ENCODE measurements at regions of chr3 and their contacts with region 1.

Region 1: GRCh38 chr3:100492059-100493006 is at the start of gene TMEM45A:
- DNase-seq: peak; percentile 98
- ATAC-seq: peak; percentile 97
- H3K4me3 ChIP-seq: peak within 1 kb of the TSS; percentile 79
- H3K27ac ChIP-seq: peak within 1 kb of the TSS; percentile 38; the same call in 1 of the 2 replicates
- H3K4me1 ChIP-seq: peaks cover 29% of the 10 kb centered on the region
- H3K27me3 ChIP-seq: no peaks in the 10 kb centered on the region
- CTCF ChIP-seq: no peak
- total RNA-seq, gene TMEM45A: 7.6 and 9.4 TPM in 2 replicates

Region 2: DNA sequence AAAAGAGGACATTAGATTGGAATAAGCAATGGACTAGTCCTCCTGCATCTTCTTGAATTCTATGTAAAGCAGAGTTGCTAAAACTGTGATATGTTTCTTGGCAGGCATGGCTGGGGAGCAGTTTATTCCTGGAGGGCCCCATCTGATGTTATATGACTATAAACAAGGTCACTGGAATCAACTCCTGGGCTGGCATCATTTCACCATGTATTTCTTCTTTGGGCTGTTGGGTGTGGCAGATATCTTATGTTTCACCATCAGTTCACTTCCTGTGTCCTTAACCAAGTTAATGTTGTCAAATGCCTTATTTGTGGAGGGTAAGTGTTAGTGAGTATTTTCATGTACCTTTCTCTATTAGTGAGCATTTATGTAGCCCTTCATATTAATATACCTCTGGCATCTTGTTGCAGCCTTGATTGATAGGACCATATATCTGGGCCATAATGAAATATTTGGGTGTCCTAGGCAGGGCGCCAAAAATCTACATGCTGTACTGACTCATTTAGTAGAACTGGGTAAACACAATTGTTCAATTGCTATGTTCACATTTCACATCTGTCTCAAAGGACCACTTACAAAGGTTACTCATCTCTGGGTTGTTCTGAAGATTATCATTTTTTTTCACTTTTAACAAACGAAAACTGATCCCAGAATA is 64.5 kb after region 1 on chr3:
- CTCF ChIA-PET with region 1: no interaction called
- POLR2A ChIA-PET with region 1: no interaction called
- intact Hi-C with region 1: loop called (anchors 2 kb)
- DNase-seq: peak; percentile 87
- ATAC-seq: peak; percentile 72
- H3K4me3 ChIP-seq: no peak overlapping the region
- H3K27ac ChIP-seq: peak overlapping the region; percentile 60
- H3K4me1 ChIP-seq: peaks cover 50% of the 10 kb centered on the region
- H3K27me3 ChIP-seq: no peaks in the 10 kb centered on the region
- CTCF ChIP-seq: no peak

Region 3: DNA sequence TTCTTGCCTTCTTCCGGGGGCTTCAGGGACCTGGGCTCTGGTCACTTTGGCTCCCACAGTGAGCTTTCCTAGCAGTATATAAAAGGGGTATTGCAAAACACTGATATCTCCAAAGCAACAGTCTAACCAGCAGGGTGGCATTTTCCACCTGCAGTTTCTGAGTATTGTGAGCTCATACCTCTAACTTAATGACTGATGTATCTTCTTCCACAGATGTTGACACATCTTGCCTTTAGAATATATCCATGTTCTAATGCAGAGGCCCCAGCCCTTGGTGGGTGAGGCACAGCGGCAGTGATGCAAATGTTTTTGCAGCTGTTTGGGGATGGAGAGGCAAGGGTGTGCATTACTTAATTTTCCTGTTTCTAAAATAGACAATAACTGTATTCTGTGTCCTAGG is 71.4 kb after region 1 on chr3:
- CTCF ChIA-PET with region 1: interaction called, 9 read pairs
- POLR2A ChIA-PET with region 1: interaction called, 10 read pairs
- intact Hi-C with region 1: no loop called
- DNase-seq: no peak
- ATAC-seq: no peak
- H3K4me3 ChIP-seq: no peak overlapping the region
- H3K27ac ChIP-seq: no peak overlapping the region
- H3K4me1 ChIP-seq: peaks cover 5% of the 10 kb centered on the region; the same call in 1 of the 2 replicates
- H3K27me3 ChIP-seq: no peaks in the 10 kb centered on the region
- CTCF ChIP-seq: no peak

Region 4: GRCh38 chr3:100590114-100590839 is 97.9 kb after region 1 on chr3:
- CTCF ChIA-PET with region 1: interaction called, 6 read pairs
- POLR2A ChIA-PET with region 1: no interaction called
- intact Hi-C with region 1: loop called (anchors 1 kb)
- DNase-seq: peak; percentile 87
- ATAC-seq: peak; percentile 82
- H3K4me3 ChIP-seq: 0 out of 2 replicates have a peak overlapping the region, but pooled peaks have one; percentile 24
- H3K27ac ChIP-seq: no peak overlapping the region
- H3K4me1 ChIP-seq: peaks cover 19% of the 10 kb centered on the region
- H3K27me3 ChIP-seq: no peaks in the 10 kb centered on the region
- CTCF ChIP-seq: peak; percentile 96

Region 5: GRCh38 chr3:100634493-100635272 is 142.3 kb after region 1 on chr3:
- CTCF ChIA-PET with region 1: no interaction called
- POLR2A ChIA-PET with region 1: no interaction called
- intact Hi-C with region 1: no loop called
- DNase-seq: peak; percentile 62
- ATAC-seq: peak; percentile 78
- H3K4me3 ChIP-seq: no peak overlapping the region
- H3K27ac ChIP-seq: no peak overlapping the region
- H3K4me1 ChIP-seq: peaks cover 12% of the 10 kb centered on the region
- H3K27me3 ChIP-seq: no peaks in the 10 kb centered on the region
- CTCF ChIP-seq: peak; percentile 52